Posterior vena cava (tissue), 2 donors: ENCODE measurements at regions of chr11 and their contacts with region 1.

Region 1: DNA sequence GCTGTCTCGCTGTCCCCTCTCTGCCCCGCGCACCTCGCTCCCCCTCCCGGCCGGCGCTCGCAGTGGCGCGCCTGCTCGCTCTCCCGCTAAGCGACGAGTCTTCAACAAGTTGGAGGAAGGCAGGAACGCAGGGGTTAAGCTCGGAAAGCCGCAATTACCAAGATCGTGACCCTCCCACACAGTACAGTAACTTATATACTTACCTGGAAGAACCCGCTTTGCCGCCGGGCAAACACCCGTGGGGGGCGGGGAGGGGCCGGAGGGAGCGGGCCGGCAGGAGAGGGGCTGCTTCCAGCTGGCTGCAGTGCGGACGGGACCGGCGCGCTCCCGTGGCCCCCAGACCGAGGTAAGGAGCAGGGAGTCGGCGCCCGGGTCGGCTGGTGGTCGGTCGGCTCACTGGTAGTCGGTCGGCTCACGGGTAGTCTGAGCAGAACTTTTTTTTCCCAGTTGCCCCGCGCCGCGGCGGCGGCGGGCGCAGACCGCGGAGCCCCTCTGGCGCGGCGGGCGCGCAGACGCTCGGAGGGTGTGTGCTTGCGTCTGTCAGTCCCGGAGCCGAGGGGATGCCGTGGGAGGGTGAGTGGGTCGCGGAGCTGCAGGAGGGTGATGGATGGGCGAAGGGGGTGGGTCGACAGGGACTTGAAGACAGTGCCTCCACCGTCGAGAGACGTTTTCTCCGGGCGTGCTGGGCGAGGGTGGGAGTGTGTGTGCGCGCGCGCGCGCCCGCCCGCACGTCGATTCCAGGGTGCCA is 101.2 kb upstream of the HSD17B12 start:
- DNase-seq: no peak

Region 2: GRCh38 chr11:43619863-43620505 is 40.6 kb after region 1 on chr11:
- intact Hi-C with region 1: no loop called
- DNase-seq: no peak

Region 3: GRCh38 chr11:43845816-43846215 is 266.5 kb after region 1 on chr11:
- intact Hi-C with region 1: loop called in 1 of 2 experiments (anchors 10 kb)
- DNase-seq: no peak